ENCODE measurements at regions of chr1 and their contacts with region 1.

Region 1: GRCh38 chr1:114771992-114772391 is 8.5 kb downstream of the SIKE1 start:
- DNase-seq: no peak
- H3K4me3 ChIP-seq: no peak overlapping the region
- H3K27ac ChIP-seq: no peak overlapping the region
- H3K4me1 ChIP-seq: no peaks in the 10 kb centered on the region
- H3K27me3 ChIP-seq: no peaks in the 10 kb centered on the region
- CTCF ChIP-seq: no peak

Region 2: GRCh38 chr1:114195819-114196218 is 576.2 kb before region 1 on chr1:
- intact Hi-C with region 1: loop called (anchors 5 kb)
- DNase-seq: no peak
- H3K4me3 ChIP-seq: no peak overlapping the region
- H3K27ac ChIP-seq: no peak overlapping the region
- H3K4me1 ChIP-seq: no peaks in the 10 kb centered on the region
- H3K27me3 ChIP-seq: peaks cover 0 to 10% of the 10 kb centered on the region in 2 donors
- CTCF ChIP-seq: no peak